A549 (cell line): ENCODE measurements at regions of chr1 and their contacts with region 1.

Region 1: GRCh38 chr1:16078925-16079656 is 5.6 kb upstream of the FAM131C start:
- DNase-seq: peak; percentile 52 to 76
- ATAC-seq: peak; percentile 58 to 78
- H3K4me3 ChIP-seq: no peak overlapping the region
- H3K27ac ChIP-seq: peak overlapping the region; percentile 74 to 86
- H3K4me1 ChIP-seq: peaks cover 72% of the 10 kb centered on the region
- CTCF ChIP-seq: peak; percentile 76
- EP300 ChIP-seq: no peak
- POLR2A ChIP-seq: no peak
- RAD21 ChIP-seq: peak; percentile 91

Region 2: GRCh38 chr1:16111771-16112595 is 32.9 kb after region 1 on chr1:
- CTCF ChIA-PET with region 1: interaction called, 55 read pairs
- POLR2A ChIA-PET with region 1: no interaction called
- DNase-seq: no peak
- ATAC-seq: peak; percentile 16 to 29; a peak in 4 of 6 replicates
- H3K4me3 ChIP-seq: no peak overlapping the region
- H3K27ac ChIP-seq: peak overlapping the region; percentile 58 to 86; a peak in 5 of 6 replicates
- H3K4me1 ChIP-seq: peaks cover 20% of the 10 kb centered on the region
- CTCF ChIP-seq: no peak
- EP300 ChIP-seq: no peak
- POLR2A ChIP-seq: no peak
- RAD21 ChIP-seq: no peak

Region 3: DNA sequence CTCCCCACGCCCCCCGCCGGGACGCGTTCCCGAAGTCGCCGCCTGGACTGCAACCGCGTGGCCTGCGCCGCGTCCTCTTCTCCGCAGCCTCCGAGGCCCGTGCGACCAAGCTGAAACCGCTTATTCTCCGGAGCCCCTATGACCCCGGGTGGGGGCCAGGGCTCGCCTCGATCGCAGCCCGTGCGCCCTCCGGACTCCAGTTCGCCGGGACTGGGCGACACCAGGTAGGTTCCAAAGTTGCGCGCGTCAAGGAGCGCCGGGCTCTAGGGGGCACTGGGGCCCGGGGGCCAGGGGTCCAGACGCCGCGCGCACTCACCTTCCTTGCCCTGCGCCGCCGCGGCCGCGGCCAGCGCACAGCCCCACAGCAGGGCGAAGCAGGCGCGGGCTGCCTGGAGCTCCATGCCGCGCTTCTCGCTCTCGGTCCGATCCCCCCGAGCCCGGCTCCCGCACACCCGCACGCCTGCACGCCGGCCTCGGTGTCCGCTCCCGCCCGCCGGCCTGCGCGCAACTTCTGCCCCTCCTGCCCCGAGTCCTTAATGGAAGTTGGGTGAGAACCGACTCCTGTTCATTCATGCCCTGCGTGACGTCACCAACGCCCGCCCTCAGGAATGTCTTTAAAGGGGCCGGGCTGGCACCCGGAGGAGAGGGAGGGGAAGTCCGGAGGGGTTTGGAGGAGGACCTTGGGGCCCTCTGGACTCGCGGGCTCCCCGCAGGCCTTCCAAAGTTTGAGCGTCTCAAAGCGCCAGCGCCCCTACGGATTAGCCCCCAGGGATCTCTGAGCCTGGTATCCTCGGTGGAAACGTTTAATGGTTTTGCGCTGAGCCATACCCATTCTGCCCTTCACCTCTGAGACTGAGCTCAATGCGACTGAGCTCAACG is 76.7 kb after region 1 on chr1 and contains the start of gene EPHA2:
- CTCF ChIA-PET with region 1: interaction called, 222 read pairs
- POLR2A ChIA-PET with region 1: interaction called, 5 read pairs
- DNase-seq: peak; percentile 79 to 91
- ATAC-seq: peak; percentile 76 to 84
- H3K4me3 ChIP-seq: peak within 1 kb of the TSS; percentile 93
- H3K27ac ChIP-seq: peak within 1 kb of the TSS; percentile 97 to 100
- H3K4me1 ChIP-seq: peaks cover 44% of the 10 kb centered on the region
- CTCF ChIP-seq: no peak
- EP300 ChIP-seq: no peak
- POLR2A ChIP-seq: peak; percentile 93
- RAD21 ChIP-seq: peak in 1 of 2 experiments; percentile 16; a peak in 1 of 5 replicates
- polyA plus RNA-seq, gene EPHA2: 55.0 and 59.3 TPM in 2 replicates

Region 4: DNA sequence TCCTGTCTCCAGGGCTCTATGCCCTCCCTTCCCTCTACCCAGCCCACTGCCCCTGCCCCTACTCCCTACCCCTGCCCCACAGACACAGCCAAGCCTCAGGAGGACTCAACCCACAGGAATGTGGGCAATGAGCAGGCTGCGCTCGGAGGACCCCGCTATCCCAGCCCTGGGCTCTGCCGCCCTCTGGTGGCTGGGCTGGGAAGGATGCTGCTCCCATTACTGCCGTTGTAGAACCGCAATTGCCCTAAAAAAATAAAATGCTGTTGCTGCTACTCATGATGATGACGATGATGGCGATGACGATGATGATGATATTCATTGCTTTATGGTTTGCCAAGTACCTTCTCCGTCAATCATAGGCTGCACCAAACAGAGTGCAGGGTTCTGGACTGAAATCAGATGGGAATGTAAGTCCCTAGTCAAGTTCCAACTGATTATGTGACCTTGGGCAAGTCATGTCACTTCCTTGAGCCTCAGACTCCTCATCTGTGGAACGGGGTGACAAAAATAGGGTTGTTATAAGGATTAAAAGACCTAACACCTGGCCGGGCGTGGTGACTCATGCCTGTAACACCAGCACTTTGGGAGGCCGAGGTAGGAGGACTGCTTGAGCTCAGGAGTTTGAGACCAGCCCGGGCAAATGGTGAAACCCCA is 108.8 kb after region 1 on chr1:
- CTCF ChIA-PET with region 1: interaction called, 318 read pairs
- POLR2A ChIA-PET with region 1: interaction called, 7 read pairs
- DNase-seq: peak in 1 of 2 experiments; percentile 78
- ATAC-seq: peak; percentile 61 to 81
- H3K4me3 ChIP-seq: no peak overlapping the region
- H3K27ac ChIP-seq: peak overlapping the region; percentile 93 to 95
- H3K4me1 ChIP-seq: peaks cover 70% of the 10 kb centered on the region
- CTCF ChIP-seq: peak; percentile 90
- EP300 ChIP-seq: no peak
- POLR2A ChIP-seq: no peak
- RAD21 ChIP-seq: peak; percentile 99

Region 5: DNA sequence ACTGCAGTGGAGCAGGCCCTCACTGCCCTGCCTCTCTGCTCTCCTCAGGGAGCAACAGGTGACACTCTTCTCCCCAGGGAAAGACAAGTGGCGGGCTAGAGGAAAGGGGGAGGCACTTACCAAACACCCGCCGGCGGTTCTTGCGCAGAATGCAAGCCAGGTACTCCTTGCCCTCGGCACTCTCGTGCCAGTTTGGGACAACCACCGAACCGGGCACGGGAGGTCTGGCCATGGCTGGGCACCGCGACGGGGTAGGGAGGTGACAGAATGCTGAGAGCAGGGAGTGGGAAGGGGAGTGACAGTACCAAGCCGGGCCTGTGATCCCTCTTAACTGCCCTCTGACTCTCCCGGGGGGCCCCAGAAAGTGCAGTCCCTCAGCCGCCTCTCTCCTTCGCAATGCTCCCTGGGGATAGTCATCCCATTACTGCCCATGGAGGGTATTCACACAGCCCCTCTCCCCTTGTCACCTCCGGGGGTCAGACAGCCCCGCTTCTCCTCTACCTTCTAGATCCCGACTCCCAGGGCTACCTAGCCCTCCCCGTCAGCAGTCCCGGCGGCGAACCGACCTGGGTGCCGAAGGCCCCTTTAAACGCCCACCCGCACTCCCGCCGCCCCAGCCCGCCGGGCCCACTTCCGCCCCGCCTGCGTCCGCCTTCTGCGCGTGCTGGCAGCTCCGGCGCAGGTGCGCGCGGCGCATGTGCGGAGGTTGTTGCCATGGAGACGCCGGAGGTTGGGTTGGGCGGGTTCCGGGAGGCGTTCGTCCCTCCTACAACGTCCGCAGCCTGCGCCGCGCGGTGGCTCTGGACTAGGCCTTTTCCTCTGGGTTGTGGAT is 157.6 kb after region 1 on chr1 and contains the start of gene CPLANE2:
- CTCF ChIA-PET with region 1: interaction called, 107 read pairs
- POLR2A ChIA-PET with region 1: no interaction called
- DNase-seq: peak; percentile 81 to 90
- ATAC-seq: peak; percentile 89 to 91
- H3K4me3 ChIP-seq: peak within 1 kb of the TSS; percentile 88
- H3K27ac ChIP-seq: peak within 1 kb of the TSS; percentile 92 to 94
- H3K4me1 ChIP-seq: peaks cover 14% of the 10 kb centered on the region
- CTCF ChIP-seq: no peak
- EP300 ChIP-seq: no peak
- POLR2A ChIP-seq: peak; percentile 39; the same call in 1 of the 2 replicates
- RAD21 ChIP-seq: no peak
- polyA plus RNA-seq, gene CPLANE2: 2.4 and 3.6 TPM in 2 replicates